ENCODE measurements at regions of chr5 and their contacts with region 1.

Region 1: DNA sequence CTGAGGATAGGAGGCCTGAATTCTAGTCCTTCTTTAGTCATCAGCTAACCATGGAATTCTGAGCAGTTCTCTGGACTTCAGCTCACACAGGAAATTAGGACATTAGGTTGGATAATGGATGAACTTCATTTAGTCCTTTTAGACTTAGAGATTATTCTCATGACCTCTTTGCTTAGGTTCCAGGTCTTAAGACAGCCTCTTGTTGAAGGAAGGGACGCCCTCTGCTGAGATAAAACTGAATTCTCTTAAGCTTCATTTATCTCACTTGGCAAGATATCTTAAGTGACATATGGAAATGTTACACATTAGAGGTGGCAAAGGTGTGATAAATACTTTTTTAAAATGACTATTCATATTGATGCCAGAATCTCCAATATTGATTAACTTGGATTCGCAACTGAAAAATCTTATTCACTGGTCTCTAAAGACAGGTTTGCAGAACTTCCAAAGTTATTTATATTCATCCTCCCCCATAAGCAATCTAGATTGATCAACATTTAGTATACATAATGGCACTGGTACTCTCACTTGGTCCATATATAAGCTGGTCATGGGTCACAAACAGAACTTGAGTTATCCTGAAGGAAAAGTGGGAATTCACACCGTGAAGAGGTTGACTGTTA is 16.9 kb upstream of the ZNF366 start:
- DNase-seq: peak; percentile 73
- H3K4me3 ChIP-seq: no peak overlapping the region
- CTCF ChIP-seq: peak; percentile 46

Region 2: GRCh38 chr5:72355706-72356299 is 168.3 kb before region 1 on chr5:
- CTCF ChIA-PET with region 1: interaction called, 40 read pairs
- POLR2A ChIA-PET with region 1: no interaction called
- DNase-seq: no peak
- H3K4me3 ChIP-seq: no peak overlapping the region
- CTCF ChIP-seq: peak; percentile 58

Region 3: DNA sequence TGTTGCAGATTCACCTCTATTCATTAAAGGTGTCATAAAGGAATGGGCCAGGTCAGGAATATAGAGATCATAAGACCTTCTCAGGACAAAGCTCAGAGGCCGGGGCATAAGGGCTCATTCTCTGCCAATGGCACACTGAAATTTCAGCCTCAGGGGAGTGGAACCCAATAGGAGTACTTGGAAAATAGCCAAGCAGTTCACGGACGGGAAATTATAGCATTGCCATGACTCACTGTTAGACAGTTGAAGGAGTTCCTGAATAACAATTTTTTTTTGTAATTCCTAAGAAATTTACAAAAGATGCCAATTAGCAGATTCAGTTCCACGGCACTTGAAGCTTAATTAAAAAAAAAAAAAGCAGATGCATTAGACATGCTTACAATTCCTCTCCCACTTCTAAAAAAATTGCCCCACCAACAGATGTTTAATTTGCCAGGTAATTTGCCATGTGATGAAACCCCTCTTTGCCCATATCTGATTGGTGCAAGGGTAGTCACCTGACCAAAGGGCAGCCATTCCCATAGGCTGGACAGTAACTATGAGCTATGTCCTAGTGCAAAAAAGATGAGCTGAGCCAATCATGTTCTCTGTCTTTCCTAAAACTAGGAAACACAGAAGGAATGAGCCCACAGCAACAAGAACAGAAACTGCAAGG is 145.3 kb before region 1 on chr5:
- CTCF ChIA-PET with region 1: interaction called, 12 read pairs
- POLR2A ChIA-PET with region 1: no interaction called
- DNase-seq: no peak
- H3K4me3 ChIP-seq: no peak overlapping the region
- CTCF ChIP-seq: no peak

Region 4: GRCh38 chr5:72412283-72413055 is 111.6 kb before region 1 on chr5:
- CTCF ChIA-PET with region 1: interaction called, 48 read pairs
- POLR2A ChIA-PET with region 1: interaction called, 3 read pairs
- DNase-seq: peak; percentile 73
- H3K4me3 ChIP-seq: no peak overlapping the region
- CTCF ChIP-seq: peak; percentile 63

Region 5: DNA sequence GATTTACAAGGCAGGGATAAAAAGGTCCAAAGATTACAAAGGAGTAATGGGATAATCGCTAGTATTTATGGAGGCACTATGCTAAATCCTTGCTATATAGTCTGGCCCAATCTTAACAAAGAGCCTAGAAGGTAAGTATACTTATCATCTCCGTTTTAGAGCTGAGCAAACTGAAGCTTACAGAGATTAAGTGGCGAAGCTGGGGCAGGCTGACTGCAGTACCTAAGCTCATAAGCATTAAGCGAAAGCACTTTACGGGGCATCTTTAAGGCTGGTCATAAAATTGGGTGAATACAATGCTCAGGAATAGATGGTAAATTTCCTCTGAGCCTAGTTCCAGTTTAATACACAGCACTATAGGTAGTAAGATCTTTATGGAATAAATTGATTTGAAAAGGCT is 13.1 kb after region 1 on chr5:
- CTCF ChIA-PET with region 1: interaction called, 11 read pairs
- POLR2A ChIA-PET with region 1: no interaction called
- DNase-seq: no peak
- H3K4me3 ChIP-seq: no peak overlapping the region
- CTCF ChIP-seq: no peak

Measured in AG04449 (cell line).